Activated CD8-positive, alpha-beta T cell treated with anti-CD3 and anti-CD28 coated beads, Interleukin-2, amount 10 ng/mL, durations not matched to agents 7 days and 5 days (primary cell): ENCODE measurements at regions of chr21 and their contacts with region 1.

Region 1: GRCh38 chr21:44353191-44353970 is at the start of gene TRPM2:
- DNase-seq: peak; percentile 74
- ATAC-seq: peak; percentile 83
- H3K4me3 Mint-ChIP-seq: peak within 1 kb of the TSS; percentile 76
- H3K27ac Mint-ChIP-seq: peak within 1 kb of the TSS; percentile 83
- H3K4me1 Mint-ChIP-seq: peaks cover 60% of the 10 kb centered on the region
- H3K27me3 Mint-ChIP-seq: peaks cover 5% of the 10 kb centered on the region
- total RNA-seq, gene TRPM2: 35.6 to 40.9 TPM

Region 2: GRCh38 chr21:44306936-44307704 is 46.3 kb before region 1 on chr21:
- CTCF ChIA-PET with region 1: no interaction called
- POLR2A ChIA-PET with region 1: no interaction called
- DNase-seq: no peak
- ATAC-seq: no peak
- H3K4me3 Mint-ChIP-seq: no peak overlapping the region
- H3K27ac Mint-ChIP-seq: no peak overlapping the region
- H3K4me1 Mint-ChIP-seq: peaks cover 25% of the 10 kb centered on the region
- H3K27me3 Mint-ChIP-seq: no peaks in the 10 kb centered on the region

Region 3: GRCh38 chr21:44338971-44339910 is 14.1 kb before region 1 on chr21 and contains the start of gene CFAP410:
- CTCF ChIA-PET with region 1: interaction called, 6 read pairs
- POLR2A ChIA-PET with region 1: interaction called, 10 read pairs
- DNase-seq: peak; percentile 96
- ATAC-seq: peak; percentile 95
- H3K4me3 Mint-ChIP-seq: peak within 1 kb of the TSS; percentile 80
- H3K27ac Mint-ChIP-seq: peak within 1 kb of the TSS; percentile 90
- H3K4me1 Mint-ChIP-seq: peaks cover 29% of the 10 kb centered on the region
- H3K27me3 Mint-ChIP-seq: no peaks in the 10 kb centered on the region
- total RNA-seq, gene CFAP410: 16.8 to 17.4 TPM

Region 4: DNA sequence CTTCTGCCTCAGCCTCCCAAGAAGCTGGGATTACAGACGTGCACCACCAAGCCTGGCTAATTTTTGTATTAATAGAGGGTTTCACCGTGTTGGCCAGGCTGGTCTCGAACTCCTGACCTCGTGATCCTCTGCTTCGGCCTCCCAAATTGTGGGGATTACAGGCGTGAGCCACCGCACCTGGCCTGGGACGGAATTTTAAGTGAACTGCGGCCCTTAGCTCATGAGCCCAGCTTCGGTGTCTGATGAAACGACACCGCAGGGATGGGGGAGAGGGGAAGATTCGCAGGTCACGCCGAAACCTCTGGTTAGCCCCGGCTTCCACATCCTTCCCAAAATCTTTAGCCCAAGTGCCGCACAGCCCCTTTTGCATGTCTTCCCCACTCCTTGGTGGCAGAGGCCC is 141.0 kb after region 1 on chr21:
- CTCF ChIA-PET with region 1: no interaction called
- POLR2A ChIA-PET with region 1: no interaction called
- DNase-seq: no peak
- ATAC-seq: no peak
- H3K4me3 Mint-ChIP-seq: no peak overlapping the region
- H3K27ac Mint-ChIP-seq: no peak overlapping the region
- H3K4me1 Mint-ChIP-seq: peaks cover 8% of the 10 kb centered on the region
- H3K27me3 Mint-ChIP-seq: peaks cover 7% of the 10 kb centered on the region

Region 5: DNA sequence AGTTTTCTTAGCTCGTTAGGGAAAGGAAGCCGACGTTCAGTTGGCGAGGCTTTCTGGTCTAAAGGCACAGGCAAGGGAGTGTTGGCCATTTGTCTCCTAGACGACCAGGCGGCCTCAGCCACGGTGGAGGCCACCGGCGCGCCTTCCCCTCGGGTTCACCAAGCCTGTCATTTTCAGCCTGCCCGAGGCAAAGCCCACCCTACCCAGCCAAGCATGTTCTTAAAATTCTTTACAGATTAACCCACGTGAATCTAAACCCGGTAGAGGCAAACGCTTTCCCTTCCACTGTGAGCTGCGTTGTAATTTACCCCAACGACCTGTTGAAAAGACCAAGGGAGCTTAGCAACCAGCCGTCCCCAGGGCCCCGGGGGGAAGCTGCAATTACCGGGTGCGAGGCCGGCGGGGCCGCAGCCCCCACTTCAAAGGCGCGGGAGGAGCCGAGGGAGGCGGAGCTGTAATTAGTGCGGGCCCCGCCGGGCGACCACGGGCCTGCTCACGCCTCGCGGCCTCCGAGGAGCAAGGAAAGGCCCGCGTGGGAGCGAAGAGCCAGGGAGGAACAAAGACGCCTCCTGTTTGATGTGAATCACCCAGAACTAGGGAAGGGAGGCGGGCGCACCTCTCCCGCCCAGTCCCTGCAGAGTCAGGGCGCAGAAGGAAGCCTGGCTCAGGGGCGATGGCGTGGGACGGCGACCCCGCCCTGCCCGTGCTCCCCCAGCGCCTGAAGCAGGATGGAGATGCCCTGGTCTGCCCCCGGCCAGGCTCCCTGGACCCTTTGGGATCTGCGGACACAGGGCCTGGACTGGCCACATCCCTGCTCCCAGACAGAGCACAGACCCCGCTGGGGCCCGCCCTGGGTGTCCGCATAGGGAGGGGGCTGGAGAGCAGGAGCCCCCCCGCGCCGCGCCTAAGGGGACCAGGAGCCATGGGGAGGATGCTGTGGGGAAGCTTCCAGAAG is 370.1 kb after region 1 on chr21:
- CTCF ChIA-PET with region 1: no interaction called
- POLR2A ChIA-PET with region 1: no interaction called
- DNase-seq: no peak
- ATAC-seq: peak; percentile 61
- H3K4me3 Mint-ChIP-seq: no peak overlapping the region
- H3K27ac Mint-ChIP-seq: no peak overlapping the region
- H3K4me1 Mint-ChIP-seq: peaks cover 10% of the 10 kb centered on the region
- H3K27me3 Mint-ChIP-seq: peaks cover 50% of the 10 kb centered on the region